ENCODE measurements at regions of chr17 and their contacts with region 1.

Region 1: GRCh38 chr17:43878260-43879175 is 28.8 kb downstream of the MPP2 start:
- DNase-seq: peak; percentile 76
- ATAC-seq: peak; percentile 93
- H3K4me3 ChIP-seq: no peak overlapping the region
- H3K4me3 Mint-ChIP-seq: no peak overlapping the region
- H3K27ac ChIP-seq: no peak overlapping the region
- H3K27ac Mint-ChIP-seq: no peak overlapping the region
- H3K4me1 ChIP-seq: peaks cover 0 to 3% of the 10 kb centered on the region in 2 donors
- H3K4me1 Mint-ChIP-seq: no peaks in the 10 kb centered on the region
- H3K27me3 ChIP-seq: peaks cover 0 to 22% (median 3%) of the 10 kb centered on the region in 4 experiments
- H3K27me3 Mint-ChIP-seq: peaks cover 26% of the 10 kb centered on the region
- CTCF ChIP-seq: peak; percentile 98

Region 2: DNA sequence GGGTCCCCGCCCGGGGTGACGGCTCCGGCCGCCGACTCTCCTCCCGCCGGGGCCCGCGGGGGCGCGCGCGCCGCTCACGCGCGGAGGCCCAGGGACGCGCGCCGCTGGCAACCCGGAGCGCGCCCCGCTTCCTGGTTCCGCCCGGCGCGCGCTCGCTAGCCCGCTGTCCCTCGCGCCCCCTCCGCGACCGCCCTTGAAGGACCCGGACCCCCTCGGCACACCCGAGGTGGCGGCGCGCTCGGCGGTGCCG is 1602.2 kb before region 1 on chr17 and contains the start of gene STAT5B:
- CTCF ChIA-PET with region 1: no interaction called
- POLR2A ChIA-PET with region 1: no interaction called
- intact Hi-C with region 1: no loop called
- DNase-seq: peak; percentile 88
- ATAC-seq: peak; percentile 84
- H3K4me3 ChIP-seq: peak within 1 kb of the TSS; percentile 73 to 86 (median 75)
- H3K4me3 Mint-ChIP-seq: peak within 1 kb of the TSS; percentile 91
- H3K27ac ChIP-seq: peak within 1 kb of the TSS; percentile 41 to 79
- H3K27ac Mint-ChIP-seq: peak within 1 kb of the TSS; percentile 88
- H3K4me1 ChIP-seq: peaks cover 37 to 40% of the 10 kb centered on the region in 2 donors
- H3K4me1 Mint-ChIP-seq: peaks cover 52% of the 10 kb centered on the region
- H3K27me3 ChIP-seq: no peaks in the 10 kb centered on the region
- H3K27me3 Mint-ChIP-seq: no peaks in the 10 kb centered on the region
- CTCF ChIP-seq: no peak
- total RNA-seq, gene STAT5B: 95.7 and 103 TPM in 2 replicates

Region 3: DNA sequence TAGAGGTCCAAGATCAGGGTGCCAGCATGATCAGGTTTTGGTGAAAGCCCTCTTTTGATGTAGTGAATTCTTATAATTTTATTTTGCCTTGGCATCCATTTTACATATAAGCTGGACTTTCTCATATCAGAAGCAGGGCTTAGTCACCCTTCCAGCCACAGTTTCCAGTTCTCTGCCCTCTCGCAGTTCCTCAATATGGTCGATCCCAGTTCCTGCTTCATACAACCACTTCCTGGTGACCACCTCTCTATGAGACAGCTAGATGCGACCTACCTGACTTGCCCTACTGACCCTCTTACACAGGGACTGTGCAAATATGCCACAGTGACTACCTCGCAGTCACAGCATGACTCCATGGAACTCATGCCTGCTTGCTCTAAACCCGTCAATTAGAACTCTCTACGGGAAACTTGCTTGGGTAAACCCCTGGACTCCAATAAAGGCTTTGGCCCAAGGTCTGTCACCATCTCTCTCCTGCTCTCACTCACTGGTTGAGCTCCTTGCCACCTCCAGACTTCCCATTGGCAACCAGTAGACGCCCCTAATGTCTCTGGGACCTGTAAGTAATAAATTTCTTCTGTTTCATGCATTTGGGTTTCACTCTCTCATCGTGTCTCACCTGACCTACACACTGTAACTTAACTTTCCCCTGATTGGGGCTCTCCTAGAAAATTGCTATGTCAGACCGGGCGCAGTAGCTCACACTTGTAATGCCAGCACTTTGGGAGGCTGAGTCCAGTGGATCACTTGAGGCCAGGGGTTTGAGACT is 10.1 kb before region 1 on chr17:
- CTCF ChIA-PET with region 1: interaction called, 11 read pairs
- POLR2A ChIA-PET with region 1: no interaction called
- intact Hi-C with region 1: no loop called
- DNase-seq: no peak
- ATAC-seq: no peak
- H3K4me3 ChIP-seq: no peak overlapping the region
- H3K4me3 Mint-ChIP-seq: no peak overlapping the region
- H3K27ac ChIP-seq: no peak overlapping the region
- H3K27ac Mint-ChIP-seq: peak overlapping the region; percentile 37
- H3K4me1 ChIP-seq: no peaks in the 10 kb centered on the region
- H3K4me1 Mint-ChIP-seq: no peaks in the 10 kb centered on the region
- H3K27me3 ChIP-seq: peaks cover 0 to 14% (median 4%) of the 10 kb centered on the region in 4 experiments
- H3K27me3 Mint-ChIP-seq: peaks cover 51% of the 10 kb centered on the region
- CTCF ChIP-seq: no peak